Mammary epithelial cell (primary cell): ENCODE measurements at regions of chr2 and their contacts with region 1.

Region 1: DNA sequence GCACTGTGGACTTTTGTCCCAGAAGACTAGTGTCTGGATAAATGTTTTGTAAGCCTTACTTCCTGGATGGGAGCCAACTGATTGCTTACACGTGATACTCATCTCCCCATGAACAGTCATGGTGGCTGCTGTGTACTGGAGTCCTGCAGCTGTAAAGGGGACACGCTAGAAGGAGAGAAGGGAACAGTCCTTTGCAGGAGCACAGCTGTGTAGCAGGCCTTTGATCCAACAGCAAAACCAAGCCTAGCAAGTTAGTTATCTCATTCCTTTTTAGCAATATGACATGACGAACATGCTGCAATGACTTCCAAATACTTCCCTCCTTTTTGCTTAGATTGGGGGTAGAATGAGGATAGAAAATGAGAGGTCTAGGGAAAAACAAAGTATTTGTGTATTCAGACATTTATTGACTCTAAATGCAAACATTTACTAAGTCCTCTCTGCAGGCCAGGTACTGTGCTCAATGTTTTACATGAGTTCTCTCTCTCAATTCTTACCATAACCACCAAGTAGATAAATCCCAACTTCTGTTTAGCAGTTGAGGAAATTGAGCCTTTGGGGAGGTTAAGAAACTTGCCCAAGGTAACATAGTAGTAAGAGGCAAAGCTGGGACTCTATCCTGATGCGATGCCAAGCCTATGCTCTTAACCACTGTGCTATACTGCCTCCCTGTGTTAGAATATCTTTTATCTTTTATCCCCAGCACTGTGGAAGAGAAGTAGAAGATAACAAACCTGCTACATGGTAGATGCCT is 55.4 kb upstream of the CD28 start:
- DNase-seq: peak; percentile 68
- H3K4me3 ChIP-seq: no peak overlapping the region
- H3K27ac ChIP-seq: peak overlapping the region; percentile 89
- H3K4me1 ChIP-seq: peaks cover 26% of the 10 kb centered on the region
- H3K27me3 ChIP-seq: no peaks in the 10 kb centered on the region
- CTCF ChIP-seq: peak; percentile 50 to 61

Region 2: GRCh38 chr2:202831242-202832220 is 819.5 kb before region 1 on chr2:
- CTCF ChIA-PET with region 1: no interaction called
- dilution Hi-C with region 1: no loop called
- in situ Hi-C with region 1: no loop called
- intact Hi-C with region 1: loop called (anchors 5 kb)
- DNase-seq: peak; percentile 64
- H3K4me3 ChIP-seq: no peak overlapping the region
- H3K27ac ChIP-seq: no peak overlapping the region
- H3K4me1 ChIP-seq: no peaks in the 10 kb centered on the region
- H3K27me3 ChIP-seq: no peaks in the 10 kb centered on the region
- CTCF ChIP-seq: peak; percentile 66 to 70

Region 3: DNA sequence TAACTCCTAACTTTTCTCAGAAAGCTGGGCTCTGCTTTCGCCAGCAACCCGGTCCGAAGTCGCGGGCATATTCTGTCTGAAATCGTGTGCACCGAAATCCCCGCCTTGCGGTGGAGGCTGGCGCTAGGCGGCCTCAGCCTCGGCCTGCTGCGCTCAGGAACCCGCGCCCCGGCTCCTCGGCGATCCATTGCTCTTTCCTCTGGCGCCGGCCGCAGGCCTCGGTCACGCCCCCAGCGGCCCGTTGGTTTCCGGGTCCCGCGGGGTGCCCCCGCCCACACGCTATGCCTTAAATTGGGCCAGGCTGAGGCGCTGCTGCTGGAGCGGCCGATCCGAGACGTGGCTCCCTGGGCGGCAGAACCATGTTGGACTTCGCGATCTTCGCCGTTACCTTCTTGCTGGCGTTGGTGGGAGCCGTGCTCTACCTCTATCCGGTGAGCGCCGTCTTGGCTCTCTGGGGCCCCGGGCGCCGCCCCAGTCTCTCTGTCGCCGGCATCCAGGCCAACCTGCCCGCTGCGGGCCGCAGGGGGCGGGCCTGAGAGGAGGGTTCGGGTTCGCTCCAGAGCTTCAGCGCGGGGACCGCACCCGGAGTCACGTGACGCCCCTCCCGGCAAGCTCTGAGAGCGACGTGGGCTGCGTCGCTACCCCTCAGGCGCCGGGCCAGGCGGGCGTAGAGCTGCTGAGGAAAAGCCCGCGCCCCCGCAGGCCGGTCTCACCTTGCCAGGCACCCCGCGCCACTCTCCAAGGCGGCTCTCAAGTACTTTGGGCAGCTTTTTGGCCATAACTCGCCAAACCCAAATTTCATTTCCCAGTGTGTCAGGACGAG is 412.1 kb before region 1 on chr2 and contains the start of gene CYP20A1:
- CTCF ChIA-PET with region 1: interaction called, 3 read pairs
- dilution Hi-C with region 1: no loop called
- in situ Hi-C with region 1: loop called in 1 of 2 experiments (anchors 25 kb)
- intact Hi-C with region 1: no loop called
- DNase-seq: peak; percentile 97
- H3K4me3 ChIP-seq: peak within 1 kb of the TSS; percentile 68 to 93 (median 81)
- H3K27ac ChIP-seq: peak within 1 kb of the TSS; percentile 88
- H3K4me1 ChIP-seq: peaks cover 3% of the 10 kb centered on the region
- H3K27me3 ChIP-seq: no peaks in the 10 kb centered on the region
- CTCF ChIP-seq: peak in 1 of 2 donors; percentile 46
- total RNA-seq, gene CYP20A1: 17.6 to 25.0 TPM

Region 4: DNA sequence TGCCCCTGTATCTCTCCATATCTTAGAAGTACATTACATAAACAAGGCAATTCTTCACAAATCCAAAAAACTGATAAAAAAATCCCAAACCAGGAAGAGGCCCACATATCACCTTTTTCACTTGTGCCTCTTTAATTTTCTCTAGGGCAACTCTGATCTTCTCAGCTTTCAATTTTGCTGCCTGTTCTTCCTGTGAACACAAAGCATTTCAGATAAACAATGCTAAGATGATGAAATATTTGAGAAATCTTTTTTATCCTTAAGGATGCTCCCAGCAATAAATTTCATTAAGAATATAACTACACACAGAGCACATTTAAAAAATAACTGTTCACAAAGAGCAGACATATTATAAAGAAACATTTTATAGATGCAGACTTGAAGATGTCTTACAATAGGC is 189.3 kb before region 1 on chr2:
- CTCF ChIA-PET with region 1: no interaction called
- dilution Hi-C with region 1: no loop called
- in situ Hi-C with region 1: no loop called
- intact Hi-C with region 1: no loop called
- DNase-seq: no peak
- H3K4me3 ChIP-seq: no peak overlapping the region
- H3K27ac ChIP-seq: no peak overlapping the region
- H3K4me1 ChIP-seq: no peaks in the 10 kb centered on the region
- H3K27me3 ChIP-seq: no peaks in the 10 kb centered on the region
- CTCF ChIP-seq: no peak

Region 5: GRCh38 chr2:203484266-203485112 is 166.5 kb before region 1 on chr2:
- CTCF ChIA-PET with region 1: no interaction called
- dilution Hi-C with region 1: no loop called
- in situ Hi-C with region 1: loop called in 1 of 2 experiments (anchors 25 kb)
- intact Hi-C with region 1: loop called (anchors 1 kb)
- DNase-seq: peak; percentile 29
- H3K4me3 ChIP-seq: no peak overlapping the region
- H3K27ac ChIP-seq: no peak overlapping the region
- H3K4me1 ChIP-seq: no peaks in the 10 kb centered on the region
- H3K27me3 ChIP-seq: no peaks in the 10 kb centered on the region
- CTCF ChIP-seq: peak; percentile 59 to 71

Region 6: DNA sequence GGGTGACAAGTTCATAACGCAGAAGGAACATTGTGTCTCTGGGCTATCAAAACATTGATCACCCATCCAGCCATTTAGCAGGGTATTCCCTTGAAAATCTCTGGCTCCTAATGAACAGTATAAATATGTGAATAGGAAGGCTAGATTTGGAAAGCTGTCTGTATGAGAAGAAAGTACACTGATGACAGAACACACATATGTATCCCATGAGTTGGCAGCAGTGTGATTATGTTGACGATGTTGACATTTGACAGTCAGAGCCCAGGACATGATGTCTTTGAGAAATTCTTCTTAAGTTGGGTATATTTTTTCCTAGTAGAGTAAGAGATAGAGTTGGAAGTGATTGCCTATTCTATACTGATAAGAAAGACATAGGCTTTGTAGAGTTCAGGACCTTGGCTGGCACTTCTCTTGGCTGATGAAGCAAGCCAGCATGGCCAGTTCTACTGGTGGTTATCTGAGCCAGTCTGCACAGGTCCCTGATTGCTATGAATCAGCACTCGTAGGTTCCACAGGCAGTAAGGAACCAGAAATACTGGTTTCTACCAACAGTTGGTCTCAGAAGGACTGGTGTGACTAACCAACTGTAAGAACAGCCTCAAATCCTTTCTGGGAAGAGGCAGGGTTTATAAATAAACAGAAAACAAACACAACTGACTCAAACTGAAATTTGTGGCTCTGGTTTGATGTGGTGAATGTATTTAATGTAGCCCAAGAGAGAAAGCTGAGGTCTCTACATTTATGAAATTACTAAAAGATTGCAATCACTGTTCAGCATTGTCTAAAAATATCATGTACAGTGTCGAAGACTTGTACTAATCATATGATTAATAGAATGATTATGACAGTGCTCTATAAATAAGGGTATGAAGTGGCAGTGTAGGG is 72.0 kb before region 1 on chr2:
- CTCF ChIA-PET with region 1: no interaction called
- dilution Hi-C with region 1: no loop called
- in situ Hi-C with region 1: no loop called
- intact Hi-C with region 1: loop called (anchors 2 kb)
- DNase-seq: peak; percentile 99
- H3K4me3 ChIP-seq: no peak overlapping the region
- H3K27ac ChIP-seq: peak overlapping the region; percentile 65
- H3K4me1 ChIP-seq: peaks cover 32% of the 10 kb centered on the region
- H3K27me3 ChIP-seq: no peaks in the 10 kb centered on the region
- CTCF ChIP-seq: no peak

Region 7: GRCh38 chr2:203605302-203605701 is 45.7 kb before region 1 on chr2:
- CTCF ChIA-PET with region 1: no interaction called
- dilution Hi-C with region 1: no loop called
- in situ Hi-C with region 1: no loop called
- intact Hi-C with region 1: no loop called
- DNase-seq: no peak
- H3K4me3 ChIP-seq: no peak overlapping the region
- H3K27ac ChIP-seq: no peak overlapping the region
- H3K4me1 ChIP-seq: no peaks in the 10 kb centered on the region
- H3K27me3 ChIP-seq: no peaks in the 10 kb centered on the region
- CTCF ChIP-seq: no peak

Region 8: GRCh38 chr2:203909261-203909967 is 258.4 kb after region 1 on chr2:
- CTCF ChIA-PET with region 1: no interaction called
- dilution Hi-C with region 1: no loop called
- in situ Hi-C with region 1: no loop called
- intact Hi-C with region 1: loop called (anchors 2 kb)
- DNase-seq: peak; percentile 21
- H3K4me3 ChIP-seq: peak overlapping the region in 2 of 3 experiments; percentile 12 to 22
- H3K27ac ChIP-seq: no peak overlapping the region
- H3K4me1 ChIP-seq: no peaks in the 10 kb centered on the region
- H3K27me3 ChIP-seq: no peaks in the 10 kb centered on the region
- CTCF ChIP-seq: peak; percentile 77 to 81